HCT116 (cell line): ENCODE measurements at regions of chr17 and their contacts with region 1.

Region 1: DNA sequence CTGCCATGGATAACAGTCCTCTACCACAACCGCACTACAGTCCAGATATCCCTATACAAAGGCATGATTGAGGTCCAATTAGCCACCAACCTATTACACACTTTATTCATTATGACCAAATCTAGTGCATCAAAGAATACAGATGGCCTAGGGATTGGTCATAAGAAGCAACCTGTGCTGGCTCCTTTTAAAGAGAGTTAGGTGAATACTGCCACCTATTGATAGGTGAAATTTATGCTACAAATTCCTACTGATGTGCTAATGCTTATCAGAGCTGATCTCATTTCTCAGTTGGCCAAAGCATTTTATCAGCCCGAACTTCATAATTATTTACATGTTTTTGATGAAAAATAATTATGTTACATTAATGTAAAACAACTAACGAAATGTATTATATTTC is 166.2 kb downstream of the ANKFN1 start:
- DNase-seq: peak; percentile 55
- ATAC-seq: peak; percentile 89
- H3K4me3 ChIP-seq: no peak overlapping the region
- H3K27ac ChIP-seq: no peak overlapping the region
- H3K4me1 ChIP-seq: no peaks in the 10 kb centered on the region
- H3K27me3 ChIP-seq: peaks cover 38% of the 10 kb centered on the region
- CTCF ChIP-seq: peak; percentile 54 to 83 (median 63); a peak in 5 of 6 replicates
- POLR2A ChIP-seq: no peak
- RAD21 ChIP-seq: peak; percentile 78

Region 2: DNA sequence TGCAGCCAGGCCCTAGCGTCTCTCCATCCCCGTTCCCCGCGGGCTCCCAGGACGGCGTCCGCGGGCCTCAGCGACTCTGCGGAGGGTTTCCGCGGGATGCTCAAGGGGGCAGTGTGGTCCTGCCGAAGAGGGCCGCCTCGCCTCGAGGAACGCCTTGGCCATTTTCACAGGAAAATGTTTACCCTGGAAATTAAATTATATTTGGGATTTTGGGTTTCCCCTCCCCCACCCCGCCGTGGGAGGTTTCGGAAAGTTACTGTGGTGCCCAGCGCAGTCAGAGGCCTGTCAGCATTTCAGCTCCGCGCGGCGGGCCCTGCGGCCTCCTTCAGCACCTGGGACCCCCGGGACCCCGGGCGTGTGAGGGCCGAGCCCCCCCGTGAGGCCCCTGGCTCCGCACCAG is 474.1 kb before region 1 on chr17:
- CTCF ChIA-PET with region 1: no interaction called
- POLR2A ChIA-PET with region 1: no interaction called
- RAD21 ChIA-PET with region 1: no interaction called
- intact Hi-C with region 1: loop called (anchors 10 kb)
- DNase-seq: no peak
- ATAC-seq: peak; percentile 47
- H3K4me3 ChIP-seq: no peak overlapping the region
- H3K27ac ChIP-seq: no peak overlapping the region
- H3K4me1 ChIP-seq: no peaks in the 10 kb centered on the region
- H3K27me3 ChIP-seq: peaks cover 26% of the 10 kb centered on the region
- CTCF ChIP-seq: peak in 1 of 3 experiments; percentile 32; a peak in 2 of 6 replicates
- POLR2A ChIP-seq: no peak
- RAD21 ChIP-seq: no peak; the same call in 1 of the 2 replicates

Region 3: GRCh38 chr17:55996825-55997224 is 322.7 kb before region 1 on chr17:
- CTCF ChIA-PET with region 1: no interaction called
- POLR2A ChIA-PET with region 1: no interaction called
- RAD21 ChIA-PET with region 1: no interaction called
- intact Hi-C with region 1: loop called (anchors 5 kb)
- DNase-seq: no peak
- ATAC-seq: no peak
- H3K4me3 ChIP-seq: no peak overlapping the region
- H3K27ac ChIP-seq: no peak overlapping the region
- H3K4me1 ChIP-seq: no peaks in the 10 kb centered on the region
- H3K27me3 ChIP-seq: no peaks in the 10 kb centered on the region
- CTCF ChIP-seq: peak; percentile 6 to 42 (median 14); a peak in 2 of 6 replicates
- POLR2A ChIP-seq: no peak
- RAD21 ChIP-seq: peak; percentile 28

Region 4: DNA sequence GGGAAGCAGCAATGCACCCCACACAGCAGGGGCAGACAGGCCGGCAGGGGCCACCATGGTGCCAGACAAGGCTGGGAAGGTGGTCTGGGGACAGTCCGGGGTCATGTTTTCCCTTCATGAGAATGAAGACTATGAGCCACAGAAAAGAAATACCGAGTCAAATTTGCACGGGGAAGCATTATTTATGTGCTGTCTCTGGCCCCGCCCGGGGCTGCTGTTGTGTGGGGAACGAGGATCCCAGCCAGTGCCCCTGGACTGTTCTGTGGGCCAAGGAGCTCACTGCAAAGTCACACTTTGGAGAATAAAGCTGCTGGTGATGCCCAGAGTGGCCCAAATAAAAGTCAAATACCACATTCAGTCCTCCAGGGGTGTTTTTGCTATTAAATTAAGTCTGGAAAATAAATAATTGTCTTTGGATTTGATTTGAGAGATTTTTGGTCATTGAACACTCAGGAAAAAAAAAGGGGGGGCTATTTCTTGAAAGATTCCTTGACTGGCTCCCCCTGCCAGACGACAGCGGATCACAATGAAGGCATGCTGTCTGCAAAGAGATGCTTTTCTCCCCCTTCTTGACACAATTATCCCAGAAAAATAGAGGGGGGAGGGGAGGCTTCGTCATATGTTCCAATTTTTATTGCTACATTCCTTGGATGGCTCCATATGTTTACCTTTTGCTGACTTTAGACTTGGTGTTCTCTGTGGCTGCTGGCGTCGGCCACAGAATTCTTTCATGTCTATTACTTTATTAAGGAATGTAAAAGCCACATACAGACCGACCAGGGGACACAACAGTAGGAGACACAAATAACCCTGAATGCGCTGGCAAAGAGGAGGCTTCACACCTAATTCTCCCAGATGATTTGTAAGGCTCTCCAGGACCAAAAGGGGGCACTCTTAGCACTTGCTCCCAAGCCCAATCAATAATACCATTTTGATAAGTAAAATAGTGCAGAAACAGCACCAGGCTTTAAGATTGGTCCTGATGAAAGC is 193.4 kb before region 1 on chr17:
- CTCF ChIA-PET with region 1: interaction called, 3 read pairs
- POLR2A ChIA-PET with region 1: no interaction called
- RAD21 ChIA-PET with region 1: interaction called in 1 of 2 experiments, 3 read pairs
- intact Hi-C with region 1: loop called (anchors 1 kb)
- DNase-seq: peak; percentile 52
- ATAC-seq: peak; percentile 75
- H3K4me3 ChIP-seq: no peak overlapping the region
- H3K27ac ChIP-seq: no peak overlapping the region
- H3K4me1 ChIP-seq: no peaks in the 10 kb centered on the region
- H3K27me3 ChIP-seq: peaks cover 30% of the 10 kb centered on the region
- CTCF ChIP-seq: peak; percentile 63 to 81 (median 74); a peak in 5 of 6 replicates
- POLR2A ChIP-seq: no peak
- RAD21 ChIP-seq: peak; percentile 74

Region 5: GRCh38 chr17:56358651-56359050 is 39.1 kb after region 1 on chr17:
- CTCF ChIA-PET with region 1: no interaction called
- POLR2A ChIA-PET with region 1: no interaction called
- RAD21 ChIA-PET with region 1: no interaction called
- intact Hi-C with region 1: no loop called
- DNase-seq: peak; percentile 22
- ATAC-seq: peak; percentile 40; the same call in 1 of the 2 replicates
- H3K4me3 ChIP-seq: no peak overlapping the region
- H3K27ac ChIP-seq: no peak overlapping the region
- H3K4me1 ChIP-seq: peaks cover 0 to 5% of the 10 kb centered on the region in 2 experiments; a peak in 1 of 4 replicates
- H3K27me3 ChIP-seq: 0 out of 2 replicates have a peak, but pooled peaks cover 4% of the 10 kb centered on the region
- CTCF ChIP-seq: no peak
- POLR2A ChIP-seq: no peak
- RAD21 ChIP-seq: no peak

Region 6: DNA sequence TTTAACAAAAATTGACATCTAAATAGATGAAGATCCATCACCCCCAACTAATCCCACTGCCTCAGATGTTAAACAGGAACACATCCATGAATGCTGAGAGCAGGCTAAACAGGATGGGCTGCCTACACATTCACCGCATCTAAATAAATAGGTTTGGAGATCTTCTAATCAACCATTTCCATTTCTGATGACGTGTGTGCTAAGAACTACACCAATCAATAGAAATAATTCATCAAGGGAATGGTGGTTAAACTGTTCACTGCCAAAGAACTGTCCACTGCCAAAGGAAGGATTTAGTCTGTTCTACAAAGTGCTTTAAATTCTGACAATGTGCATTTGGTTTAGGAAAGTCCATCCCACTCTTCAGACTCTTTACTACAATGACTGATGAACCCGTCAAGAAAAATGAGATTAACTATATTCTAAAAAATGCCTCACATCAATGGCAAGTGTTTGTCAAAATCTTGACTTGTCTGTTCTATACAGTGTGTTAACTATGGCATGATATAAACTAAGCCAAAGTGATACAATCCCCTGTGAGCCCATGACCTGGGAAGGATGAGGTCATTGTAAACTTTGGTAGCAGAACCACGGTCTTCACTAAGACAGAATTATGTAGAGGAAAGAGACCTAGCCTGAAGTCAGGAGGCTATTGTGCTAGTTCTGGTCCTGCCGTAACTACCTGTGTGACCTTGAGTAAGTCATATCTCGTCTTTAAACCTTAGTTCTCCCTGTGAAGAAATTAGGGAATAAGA is 77.8 kb after region 1 on chr17:
- CTCF ChIA-PET with region 1: no interaction called
- POLR2A ChIA-PET with region 1: no interaction called
- RAD21 ChIA-PET with region 1: no interaction called
- intact Hi-C with region 1: no loop called
- DNase-seq: no peak
- ATAC-seq: no peak
- H3K4me3 ChIP-seq: no peak overlapping the region
- H3K27ac ChIP-seq: no peak overlapping the region
- H3K4me1 ChIP-seq: no peaks in the 10 kb centered on the region
- H3K27me3 ChIP-seq: peaks cover 15% of the 10 kb centered on the region
- CTCF ChIP-seq: no peak
- POLR2A ChIP-seq: no peak
- RAD21 ChIP-seq: no peak